Activated CD8-positive, alpha-beta T cell treated with anti-CD3 and anti-CD28 coated beads, Interleukin-2, amount 10 ng/mL, durations not matched to agents 7 days and 5 days (primary cell): ENCODE measurements at regions of chr17 and their contacts with region 1.

Region 1: GRCh38 chr17:8409966-8410864 is 12.6 kb upstream of the RNF222 start:
- DNase-seq: peak; percentile 84
- ATAC-seq: peak; percentile 80
- H3K4me3 Mint-ChIP-seq: no peak overlapping the region
- H3K27ac Mint-ChIP-seq: no peak overlapping the region
- H3K4me1 Mint-ChIP-seq: peaks cover 42% of the 10 kb centered on the region
- H3K27me3 Mint-ChIP-seq: peaks cover 22% of the 10 kb centered on the region

Region 2: DNA sequence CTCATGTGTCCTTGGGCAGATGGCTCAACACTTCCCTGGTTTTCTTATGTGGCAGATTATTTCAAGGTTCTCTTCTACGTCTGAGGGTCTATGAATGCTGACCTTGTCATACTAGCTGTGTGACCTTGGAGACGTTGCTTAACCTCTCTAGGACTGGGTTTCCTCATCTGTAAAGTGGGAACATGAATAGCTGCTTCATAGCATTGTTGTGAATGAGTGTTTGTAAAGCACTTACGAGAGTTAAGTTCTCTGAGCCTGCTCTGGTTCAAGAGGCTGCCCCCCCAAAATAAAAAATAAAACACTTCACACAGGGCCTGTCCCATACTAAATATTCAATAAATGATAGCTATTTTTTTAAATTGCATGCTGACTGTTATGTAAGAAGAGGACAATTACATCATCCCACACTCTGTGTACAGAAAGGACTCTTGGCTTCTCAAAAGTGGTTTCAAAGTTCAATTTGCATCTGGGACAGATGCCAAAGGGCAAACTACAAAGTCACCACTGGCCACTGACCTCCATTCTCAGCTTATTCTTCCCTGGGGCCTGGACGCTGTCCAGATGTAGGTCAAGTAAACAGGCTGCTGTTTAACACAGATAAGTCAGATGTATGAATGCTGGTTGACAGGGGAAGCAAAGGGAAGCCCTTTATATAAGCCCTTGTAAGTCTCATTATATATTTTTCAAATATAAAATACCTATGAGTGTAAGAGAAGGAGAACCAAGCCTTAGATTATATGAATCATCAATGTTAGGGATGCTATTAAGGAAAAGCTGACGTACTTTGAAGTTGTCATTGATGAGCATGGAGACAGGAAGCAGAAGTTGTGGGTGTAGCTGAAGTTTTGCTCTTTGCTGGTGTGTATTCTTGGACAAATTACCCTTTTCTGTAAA is 10.1 kb after region 1 on chr17:
- CTCF ChIA-PET with region 1: interaction called, 36 read pairs
- POLR2A ChIA-PET with region 1: interaction called, 4 read pairs
- DNase-seq: no peak
- ATAC-seq: no peak
- H3K4me3 Mint-ChIP-seq: no peak overlapping the region
- H3K27ac Mint-ChIP-seq: no peak overlapping the region
- H3K4me1 Mint-ChIP-seq: no peaks in the 10 kb centered on the region
- H3K27me3 Mint-ChIP-seq: peaks cover 49% of the 10 kb centered on the region

Region 3: DNA sequence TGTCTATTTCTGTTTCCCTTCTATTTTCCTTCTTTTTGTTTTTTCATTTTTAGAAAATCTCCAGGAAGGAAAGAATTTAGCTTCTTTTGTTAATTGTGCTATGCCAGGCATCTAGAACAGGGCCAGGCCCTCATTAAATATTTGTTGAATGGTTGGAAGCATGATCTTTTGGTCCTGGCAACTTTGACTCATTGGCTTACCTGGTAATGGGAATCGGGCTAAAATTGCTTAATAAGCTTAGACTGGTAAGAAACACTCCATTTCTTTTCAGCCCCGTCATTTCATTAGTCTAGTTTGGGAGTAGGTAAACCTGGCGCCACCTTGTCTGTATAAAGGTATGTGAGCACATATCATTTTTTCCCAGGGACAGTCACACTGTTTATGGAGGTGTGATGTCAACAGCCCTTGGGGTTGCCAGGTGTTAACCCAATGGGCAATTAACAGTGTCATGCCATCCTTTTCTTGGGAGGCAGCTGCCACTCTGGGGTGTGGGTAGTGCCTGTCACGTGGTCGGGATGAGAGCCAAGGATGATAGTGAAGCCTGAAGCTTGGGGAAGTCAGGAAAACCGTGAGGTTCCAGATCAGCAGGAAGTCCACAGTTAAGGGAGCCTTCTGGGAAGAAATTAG is 16.0 kb after region 1 on chr17:
- CTCF ChIA-PET with region 1: interaction called, 36 read pairs
- POLR2A ChIA-PET with region 1: interaction called, 4 read pairs
- DNase-seq: no peak
- ATAC-seq: no peak
- H3K4me3 Mint-ChIP-seq: no peak overlapping the region
- H3K27ac Mint-ChIP-seq: no peak overlapping the region
- H3K4me1 Mint-ChIP-seq: no peaks in the 10 kb centered on the region
- H3K27me3 Mint-ChIP-seq: peaks cover 17% of the 10 kb centered on the region

Region 4: DNA sequence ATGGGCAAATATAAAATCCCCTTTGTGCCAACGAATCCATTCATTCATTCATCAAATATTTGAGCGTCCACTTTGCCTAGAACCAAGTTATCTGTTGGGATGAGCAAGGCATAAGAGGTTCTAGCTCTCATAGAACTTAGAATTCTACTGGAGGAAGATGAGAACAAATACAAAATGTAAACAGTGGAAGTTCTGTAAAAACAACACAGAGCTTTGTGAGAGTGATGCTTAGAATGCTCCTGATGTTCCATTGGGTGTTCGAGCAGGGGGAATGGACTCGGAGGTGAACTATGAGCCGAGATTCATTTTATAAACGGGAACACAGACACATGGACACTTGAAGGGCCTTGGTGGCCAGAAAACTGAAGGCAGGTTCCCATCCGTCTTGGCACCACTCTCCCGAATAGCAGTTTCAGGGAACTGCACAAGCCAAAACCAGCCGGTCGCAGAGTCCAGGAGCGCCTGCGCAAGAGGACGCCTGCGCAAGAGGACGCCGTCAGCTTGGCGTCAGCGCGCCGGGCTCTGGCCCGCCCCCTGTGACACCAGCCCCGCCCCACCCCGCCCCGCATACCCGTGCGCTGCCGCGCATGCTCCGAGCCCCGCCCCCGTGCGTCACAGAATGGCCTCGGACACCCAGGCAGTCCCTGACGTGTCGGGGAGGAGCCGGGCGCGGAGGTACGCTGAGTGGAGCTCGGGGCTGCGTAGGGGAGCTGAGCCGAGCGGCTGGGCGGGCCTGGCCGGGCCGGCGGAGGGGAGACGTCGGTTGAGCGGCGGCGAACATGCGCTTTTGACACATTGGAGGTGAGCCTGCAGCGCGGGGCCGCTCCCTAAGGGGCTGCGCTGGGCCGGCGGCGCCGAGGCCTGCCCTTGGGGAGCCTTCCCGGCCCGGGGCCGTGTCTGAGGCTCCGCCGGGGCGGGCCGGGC is 25.3 kb after region 1 on chr17 and contains the start of gene NDEL1:
- CTCF ChIA-PET with region 1: interaction called, 10 read pairs
- POLR2A ChIA-PET with region 1: no interaction called
- DNase-seq: peak; percentile 99
- ATAC-seq: peak; percentile 98
- H3K4me3 Mint-ChIP-seq: peak within 1 kb of the TSS; percentile 93
- H3K27ac Mint-ChIP-seq: peak within 1 kb of the TSS; percentile 95
- H3K4me1 Mint-ChIP-seq: peaks cover 31% of the 10 kb centered on the region
- H3K27me3 Mint-ChIP-seq: no peaks in the 10 kb centered on the region
- total RNA-seq, gene NDEL1: 48.1 to 52.5 TPM